ENCODE measurements at regions of chr3 and their contacts with region 1.

Region 1: GRCh38 chr3:49093853-49094767 is at the start of gene QRICH1:
- DNase-seq: peak; percentile 91 to 98 (median 94)
- ATAC-seq: peak; percentile 76
- H3K4me3 ChIP-seq: peak within 1 kb of the TSS; percentile 87
- H3K4me3 Mint-ChIP-seq: peak within 1 kb of the TSS; percentile 96
- H3K27ac ChIP-seq: peak within 1 kb of the TSS; percentile 74 to 93
- H3K27ac Mint-ChIP-seq: peak within 1 kb of the TSS; percentile 95
- H3K4me1 ChIP-seq: peaks cover 43% of the 10 kb centered on the region
- H3K4me1 Mint-ChIP-seq: peaks cover 46% of the 10 kb centered on the region
- H3K27me3 ChIP-seq: no peaks in the 10 kb centered on the region
- H3K27me3 Mint-ChIP-seq: no peaks in the 10 kb centered on the region
- CTCF ChIP-seq: peak; percentile 57
- total RNA-seq, gene QRICH1: 210 to 255 TPM

Region 2: GRCh38 chr3:47475570-47476329 is 1618.4 kb before region 1 on chr3 and contains the start of gene SCAP:
- CTCF ChIA-PET with region 1: no interaction called
- POLR2A ChIA-PET with region 1: no interaction called
- intact Hi-C with region 1: loop called in 1 of 2 experiments (anchors 5 kb)
- DNase-seq: peak; percentile 93 to 98 (median 96)
- ATAC-seq: peak; percentile 92
- H3K4me3 ChIP-seq: peak within 1 kb of the TSS; percentile 68
- H3K4me3 Mint-ChIP-seq: peak within 1 kb of the TSS; percentile 99
- H3K27ac ChIP-seq: peak within 1 kb of the TSS; percentile 73 to 74
- H3K27ac Mint-ChIP-seq: peak within 1 kb of the TSS; percentile 89
- H3K4me1 ChIP-seq: peaks cover 28% of the 10 kb centered on the region
- H3K4me1 Mint-ChIP-seq: peaks cover 44% of the 10 kb centered on the region
- H3K27me3 ChIP-seq: no peaks in the 10 kb centered on the region
- H3K27me3 Mint-ChIP-seq: no peaks in the 10 kb centered on the region
- CTCF ChIP-seq: peak; percentile 90
- total RNA-seq, gene SCAP: 58.3 to 60.3 TPM

Region 3: GRCh38 chr3:49007068-49007770 is 86.9 kb before region 1 on chr3 and contains the start of gene WDR6:
- CTCF ChIA-PET with region 1: interaction called, 10 read pairs
- POLR2A ChIA-PET with region 1: interaction called, 49 read pairs
- intact Hi-C with region 1: loop called in 1 of 2 experiments (anchors 1 kb)
- DNase-seq: peak; percentile 93 to 99 (median 96)
- ATAC-seq: peak; percentile 86
- H3K4me3 ChIP-seq: peak within 1 kb of the TSS; percentile 99
- H3K4me3 Mint-ChIP-seq: peak within 1 kb of the TSS; percentile 99
- H3K27ac ChIP-seq: peak within 1 kb of the TSS; percentile 89 to 99
- H3K27ac Mint-ChIP-seq: peak within 1 kb of the TSS; percentile 97
- H3K4me1 ChIP-seq: peaks cover 25% of the 10 kb centered on the region
- H3K4me1 Mint-ChIP-seq: peaks cover 27% of the 10 kb centered on the region
- H3K27me3 ChIP-seq: no peaks in the 10 kb centered on the region
- H3K27me3 Mint-ChIP-seq: no peaks in the 10 kb centered on the region
- CTCF ChIP-seq: peak; percentile 19
- total RNA-seq, gene WDR6: 132 to 134 TPM

Region 4: DNA sequence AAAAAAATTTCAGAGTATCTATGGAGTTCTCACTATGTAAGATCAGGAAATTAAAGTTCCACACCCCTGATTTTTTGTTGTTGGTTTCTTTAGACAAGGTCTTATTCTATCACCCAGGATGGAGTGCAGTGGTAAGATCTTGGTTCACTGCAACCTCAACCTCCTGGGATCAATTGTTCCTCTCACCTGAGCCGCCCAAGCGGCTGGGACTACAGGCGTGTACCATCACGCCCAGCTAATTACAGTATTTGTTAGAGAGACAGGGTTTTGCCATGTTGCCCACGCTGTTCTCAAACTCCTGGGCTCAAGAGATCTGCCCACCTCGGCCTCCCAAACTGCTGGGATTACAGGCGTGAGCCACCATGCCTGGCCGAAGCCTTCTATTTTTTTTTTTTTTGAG is 12.7 kb before region 1 on chr3:
- CTCF ChIA-PET with region 1: interaction called, 4 read pairs
- POLR2A ChIA-PET with region 1: interaction called, 12 read pairs
- intact Hi-C with region 1: no loop called
- DNase-seq: no peak
- ATAC-seq: no peak
- H3K4me3 ChIP-seq: no peak overlapping the region
- H3K4me3 Mint-ChIP-seq: no peak overlapping the region
- H3K27ac ChIP-seq: no peak overlapping the region
- H3K27ac Mint-ChIP-seq: no peak overlapping the region
- H3K4me1 ChIP-seq: peaks cover 9% of the 10 kb centered on the region
- H3K4me1 Mint-ChIP-seq: peaks cover 23% of the 10 kb centered on the region
- H3K27me3 ChIP-seq: no peaks in the 10 kb centered on the region
- H3K27me3 Mint-ChIP-seq: no peaks in the 10 kb centered on the region
- CTCF ChIP-seq: no peak

Region 5: DNA sequence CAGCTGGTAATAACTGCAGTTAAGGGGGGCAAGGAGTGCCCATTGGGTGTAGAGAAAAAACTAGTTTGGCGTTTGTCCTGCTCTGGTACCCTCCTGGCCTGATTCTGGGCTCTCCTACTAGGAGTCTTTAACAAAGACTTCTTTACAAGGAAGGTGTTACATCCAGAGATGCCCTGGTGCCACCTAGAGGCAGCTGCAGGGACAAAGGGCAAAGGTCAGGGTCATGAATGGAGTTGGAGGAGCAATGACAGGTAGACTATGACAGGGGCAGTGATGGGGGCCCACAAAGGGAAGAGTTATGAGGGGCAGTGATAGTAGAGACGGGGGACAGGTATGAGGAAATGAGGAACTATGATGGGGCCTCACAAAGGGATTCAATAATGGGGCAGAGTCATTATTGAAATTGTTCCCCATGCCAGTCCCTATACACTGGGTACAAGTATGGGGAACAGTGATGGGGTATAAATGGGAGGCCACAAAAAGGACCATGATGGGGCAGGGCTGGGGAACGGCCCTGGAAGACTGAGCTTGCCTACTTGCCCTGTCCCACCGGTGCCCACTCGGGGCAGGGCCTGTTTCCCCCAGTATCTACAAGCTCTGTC is 64.1 kb after region 1 on chr3:
- CTCF ChIA-PET with region 1: interaction called, 7 read pairs
- POLR2A ChIA-PET with region 1: interaction called, 10 read pairs
- intact Hi-C with region 1: loop called in 1 of 2 experiments (anchors 2 kb)
- DNase-seq: peak; percentile 48 to 83 (median 66)
- ATAC-seq: peak; percentile 98
- H3K4me3 ChIP-seq: no peak overlapping the region
- H3K4me3 Mint-ChIP-seq: peak overlapping the region; percentile 9
- H3K27ac ChIP-seq: peak overlapping the region in 1 of 2 donors; percentile 16
- H3K27ac Mint-ChIP-seq: peak overlapping the region; percentile 3
- H3K4me1 ChIP-seq: peaks cover under 1% of the 10 kb centered on the region
- H3K4me1 Mint-ChIP-seq: peaks cover 5% of the 10 kb centered on the region
- H3K27me3 ChIP-seq: no peaks in the 10 kb centered on the region
- H3K27me3 Mint-ChIP-seq: no peaks in the 10 kb centered on the region
- CTCF ChIP-seq: peak; percentile 63

Region 6: DNA sequence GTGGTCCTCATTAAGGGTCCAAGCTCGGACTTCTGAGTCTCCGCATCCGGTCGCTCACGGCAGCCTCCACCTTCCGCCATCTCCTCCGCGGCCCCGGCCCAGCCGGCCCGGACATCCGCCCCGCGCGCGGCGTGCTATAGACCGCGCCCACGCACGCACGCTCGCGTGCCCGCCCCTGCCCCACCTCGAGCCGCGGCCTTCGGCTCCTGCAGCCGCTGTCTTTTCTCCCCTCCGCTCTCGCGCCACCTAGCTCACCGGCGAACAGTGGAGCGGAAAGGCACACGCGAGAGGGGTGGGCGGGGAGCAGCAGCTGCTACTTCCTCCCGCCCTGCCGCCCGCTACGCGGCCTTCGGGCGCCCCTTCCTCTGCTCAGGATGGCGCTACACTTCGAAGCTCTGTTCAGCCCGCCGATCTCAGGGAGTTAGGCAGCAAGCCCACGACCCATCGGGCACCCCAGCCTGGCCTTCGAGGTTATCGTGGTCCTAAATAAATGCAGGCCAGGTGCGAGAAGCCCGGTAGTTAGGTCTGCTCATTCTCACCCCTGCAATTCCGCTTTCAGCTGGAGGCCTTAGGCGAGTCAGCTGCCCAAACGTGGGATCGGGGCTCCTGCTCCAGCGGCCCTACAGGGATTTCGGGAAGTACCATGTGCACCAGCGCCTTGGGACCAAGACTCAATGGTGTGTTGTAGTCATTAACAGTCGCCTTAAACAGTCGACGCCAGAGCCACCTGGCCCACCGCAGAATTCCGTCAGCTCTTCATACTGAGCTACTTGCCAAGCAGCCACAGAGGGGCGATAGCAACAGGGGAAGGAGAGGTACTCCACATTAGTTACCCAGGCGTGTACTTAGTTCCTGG is 246.1 kb after region 1 on chr3 and contains the start of gene USP4:
- CTCF ChIA-PET with region 1: no interaction called
- POLR2A ChIA-PET with region 1: interaction called, 23 read pairs
- intact Hi-C with region 1: no loop called
- DNase-seq: peak; percentile 82 to 97 (median 92)
- ATAC-seq: peak; percentile 84
- H3K4me3 ChIP-seq: peak within 1 kb of the TSS; percentile 90
- H3K4me3 Mint-ChIP-seq: peak within 1 kb of the TSS; percentile 86
- H3K27ac ChIP-seq: peak within 1 kb of the TSS; percentile 95 to 98
- H3K27ac Mint-ChIP-seq: peak within 1 kb of the TSS; percentile 91
- H3K4me1 ChIP-seq: peaks cover 69% of the 10 kb centered on the region
- H3K4me1 Mint-ChIP-seq: peaks cover 53% of the 10 kb centered on the region
- H3K27me3 ChIP-seq: no peaks in the 10 kb centered on the region
- H3K27me3 Mint-ChIP-seq: no peaks in the 10 kb centered on the region
- CTCF ChIP-seq: peak; percentile 52
- total RNA-seq, gene USP4: 94.3 to 95.2 TPM

Measured in CD4-positive, alpha-beta T cell (primary cell).